ENCODE measurements at regions of chr13 and their contacts with region 1.

Region 1: GRCh38 chr13:38417727-38418126 is 68.1 kb downstream of the UFM1 start:
- DNase-seq: peak; percentile 24
- H3K4me3 Mint-ChIP-seq: no peak overlapping the region
- H3K27ac Mint-ChIP-seq: no peak overlapping the region
- H3K4me1 Mint-ChIP-seq: peaks cover 6% of the 10 kb centered on the region
- H3K27me3 Mint-ChIP-seq: no peaks in the 10 kb centered on the region

Region 2: GRCh38 chr13:37869756-37870488 is 547.8 kb before region 1 on chr13 and contains the start of gene TRPC4:
- CTCF ChIA-PET with region 1: no interaction called
- intact Hi-C with region 1: loop called (anchors 10 kb)
- DNase-seq: peak; percentile 15
- H3K4me3 Mint-ChIP-seq: no peak within 1 kb of the TSS
- H3K27ac Mint-ChIP-seq: no peak within 1 kb of the TSS
- H3K4me1 Mint-ChIP-seq: peaks cover 7% of the 10 kb centered on the region
- H3K27me3 Mint-ChIP-seq: peaks cover 32% of the 10 kb centered on the region
- total RNA-seq, gene TRPC4: not detected

Region 3: DNA sequence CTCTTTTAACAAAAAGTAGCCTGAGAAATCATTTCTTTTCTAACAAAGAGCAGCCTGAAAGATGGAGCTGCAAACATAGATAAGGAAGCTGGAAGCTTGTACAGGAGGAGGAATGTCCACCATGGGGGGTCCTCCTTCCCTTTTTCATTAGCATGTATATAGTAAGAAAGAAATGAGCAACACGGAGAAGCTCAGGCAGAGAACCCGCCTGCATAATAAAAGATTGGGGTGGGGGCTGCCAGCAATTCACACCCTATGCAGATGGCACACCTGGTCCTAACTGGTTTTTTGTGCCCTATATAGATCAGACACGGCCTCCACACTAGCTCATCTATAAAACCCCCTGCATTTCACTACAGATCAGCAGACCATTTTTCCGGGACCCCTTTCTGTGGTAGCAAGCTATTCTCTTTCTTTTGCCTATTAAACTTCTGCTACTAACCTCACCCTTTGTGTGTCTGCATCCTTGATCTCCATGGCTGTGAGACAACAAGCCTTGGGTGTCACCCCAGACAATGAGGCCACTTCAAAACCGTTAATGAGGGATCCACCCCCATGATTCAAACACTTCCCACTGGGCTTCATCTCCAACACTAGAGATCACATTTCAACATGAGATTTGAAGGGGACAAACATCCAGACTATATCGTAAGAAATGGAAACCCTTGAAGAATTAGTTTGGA is 101.6 kb after region 1 on chr13:
- CTCF ChIA-PET with region 1: no interaction called
- intact Hi-C with region 1: no loop called
- DNase-seq: no peak
- H3K4me3 Mint-ChIP-seq: no peak overlapping the region
- H3K27ac Mint-ChIP-seq: no peak overlapping the region
- H3K4me1 Mint-ChIP-seq: no peaks in the 10 kb centered on the region
- H3K27me3 Mint-ChIP-seq: peaks cover 8% of the 10 kb centered on the region

Measured in activated naive CD4-positive, alpha-beta T cell treated with anti-CD3 and anti-CD28 coated beads for 36 hours (primary cell).